Panc1 (cell line): ENCODE measurements at regions of chr16 and their contacts with region 1.

Region 1: GRCh38 chr16:21554795-21555585 is 44.4 kb upstream of the METTL9 start:
- DNase-seq: peak; percentile 36
- ATAC-seq: peak; percentile 92
- H3K4me3 ChIP-seq: peak overlapping the region; percentile 17 to 29
- H3K27ac ChIP-seq: no peak overlapping the region
- H3K4me1 ChIP-seq: peaks cover 5% of the 10 kb centered on the region; the same call in 1 of the 2 replicates
- H3K27me3 ChIP-seq: no peaks in the 10 kb centered on the region
- CTCF ChIP-seq: peak; percentile 100

Region 2: GRCh38 chr16:21626659-21627277 is 71.8 kb after region 1 on chr16:
- CTCF ChIA-PET with region 1: no interaction called
- POLR2A ChIA-PET with region 1: interaction called, 13 read pairs
- in situ Hi-C with region 1: no loop called
- intact Hi-C with region 1: no loop called
- DNase-seq: no peak
- ATAC-seq: no peak
- H3K4me3 ChIP-seq: no peak overlapping the region
- H3K27ac ChIP-seq: no peak overlapping the region
- H3K4me1 ChIP-seq: no peaks in the 10 kb centered on the region
- H3K27me3 ChIP-seq: no peaks in the 10 kb centered on the region
- CTCF ChIP-seq: no peak

Region 3: DNA sequence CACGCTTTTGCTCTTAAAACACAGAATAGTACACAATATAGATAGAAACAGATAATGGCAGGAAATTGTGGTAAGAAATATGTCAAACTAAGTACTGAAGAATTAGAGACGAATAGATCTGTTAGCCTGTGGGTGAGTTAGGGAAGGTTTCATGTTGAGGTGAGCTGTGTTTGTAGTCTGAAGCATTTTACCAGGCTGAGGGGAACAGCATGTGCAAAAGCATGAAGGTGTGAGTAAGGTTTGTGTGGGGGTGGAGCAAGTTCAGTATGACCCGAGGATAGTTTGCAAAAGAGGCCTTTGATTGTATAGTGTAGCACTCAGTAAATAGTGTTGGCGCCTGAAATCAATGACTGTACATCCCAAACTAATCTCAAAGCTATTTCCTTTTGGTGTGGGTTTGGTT is 83.6 kb after region 1 on chr16:
- CTCF ChIA-PET with region 1: no interaction called
- POLR2A ChIA-PET with region 1: no interaction called
- in situ Hi-C with region 1: no loop called
- intact Hi-C with region 1: no loop called
- DNase-seq: no peak
- ATAC-seq: peak; percentile 87
- H3K4me3 ChIP-seq: no peak overlapping the region
- H3K27ac ChIP-seq: no peak overlapping the region
- H3K4me1 ChIP-seq: peaks cover 5% of the 10 kb centered on the region
- H3K27me3 ChIP-seq: no peaks in the 10 kb centered on the region
- CTCF ChIP-seq: no peak